Naive thymus-derived CD4-positive, alpha-beta T cell (primary cell): ENCODE measurements at regions of chr1 and their contacts with region 1.

Region 1: GRCh38 chr1:109483672-109484518 is at the start of gene ATXN7L2:
- DNase-seq: peak; percentile 89 to 95 (median 93)
- ATAC-seq: peak; percentile 91
- H3K4me3 ChIP-seq: peak within 1 kb of the TSS; percentile 98
- H3K4me3 Mint-ChIP-seq: peak within 1 kb of the TSS; percentile 93 to 99 (median 96)
- H3K27ac ChIP-seq: peak within 1 kb of the TSS; percentile 88
- H3K27ac Mint-ChIP-seq: peak within 1 kb of the TSS; percentile 83 to 97 (median 92)
- H3K4me1 ChIP-seq: peaks cover 9 to 14% of the 10 kb centered on the region in 2 donors
- H3K4me1 Mint-ChIP-seq: peaks cover 27 to 44% (median 35%) of the 10 kb centered on the region in 7 donors
- H3K27me3 ChIP-seq: no peaks in the 10 kb centered on the region
- H3K27me3 Mint-ChIP-seq: peaks cover 0 to 23% (median under 1%) of the 10 kb centered on the region in 5 donors
- total RNA-seq, gene ATXN7L2: 10.5 to 12.8 (median 11.7) TPM

Region 2: GRCh38 chr1:109090196-109091077 is 393.5 kb before region 1 on chr1 and contains the start of gene TMEM167B:
- CTCF ChIA-PET with region 1: no interaction called
- POLR2A ChIA-PET with region 1: no interaction called
- intact Hi-C with region 1: loop called in 1 of 2 experiments (anchors 5 kb)
- DNase-seq: peak; percentile 71 to 92 (median 87)
- ATAC-seq: peak; percentile 98
- H3K4me3 ChIP-seq: peak within 1 kb of the TSS; percentile 84
- H3K4me3 Mint-ChIP-seq: peak within 1 kb of the TSS; percentile 88 to 98 (median 96)
- H3K27ac ChIP-seq: peak within 1 kb of the TSS; percentile 97
- H3K27ac Mint-ChIP-seq: peak within 1 kb of the TSS; percentile 90 to 99 (median 98)
- H3K4me1 ChIP-seq: peaks cover 14 to 18% of the 10 kb centered on the region in 2 donors
- H3K4me1 Mint-ChIP-seq: peaks cover 15 to 43% (median 36%) of the 10 kb centered on the region in 7 donors
- H3K27me3 ChIP-seq: no peaks in the 10 kb centered on the region
- H3K27me3 Mint-ChIP-seq: no peaks in the 10 kb centered on the region
- total RNA-seq, gene TMEM167B: 33.2 to 65.6 (median 41.2) TPM

Region 3: GRCh38 chr1:109248797-109249642 is 234.9 kb before region 1 on chr1 and contains the start of gene CELSR2:
- CTCF ChIA-PET with region 1: no interaction called
- POLR2A ChIA-PET with region 1: no interaction called
- intact Hi-C with region 1: loop called (anchors 1 kb)
- DNase-seq: peak; percentile 49 to 73 (median 60)
- ATAC-seq: peak; percentile 91
- H3K4me3 ChIP-seq: peak within 1 kb of the TSS; percentile 58
- H3K4me3 Mint-ChIP-seq: peak within 1 kb of the TSS; percentile 65 to 85 (median 72)
- H3K27ac ChIP-seq: no peak within 1 kb of the TSS
- H3K27ac Mint-ChIP-seq: peak within 1 kb of the TSS in 1 of 9 donors; percentile 43
- H3K4me1 ChIP-seq: peaks cover 11 to 15% of the 10 kb centered on the region in 2 donors
- H3K4me1 Mint-ChIP-seq: peaks cover 3 to 19% (median 13%) of the 10 kb centered on the region in 7 donors
- H3K27me3 ChIP-seq: no peaks in the 10 kb centered on the region
- H3K27me3 Mint-ChIP-seq: peaks cover 0 to 24% (median 7%) of the 10 kb centered on the region in 5 donors
- total RNA-seq, gene CELSR2: 3.0 to 6.4 (median 3.2) TPM

Region 4: GRCh38 chr1:109394591-109395281 is 89.2 kb before region 1 on chr1:
- CTCF ChIA-PET with region 1: no interaction called
- POLR2A ChIA-PET with region 1: no interaction called
- intact Hi-C with region 1: no loop called
- DNase-seq: no peak
- ATAC-seq: no peak
- H3K4me3 ChIP-seq: no peak overlapping the region
- H3K4me3 Mint-ChIP-seq: no peak overlapping the region
- H3K27ac ChIP-seq: no peak overlapping the region
- H3K27ac Mint-ChIP-seq: no peak overlapping the region
- H3K4me1 ChIP-seq: peaks cover 0 to 6% of the 10 kb centered on the region in 2 donors
- H3K4me1 Mint-ChIP-seq: peaks cover 0 to 39% (median 16%) of the 10 kb centered on the region in 7 donors
- H3K27me3 ChIP-seq: peaks cover 0 to 18% of the 10 kb centered on the region in 2 donors
- H3K27me3 Mint-ChIP-seq: peaks cover 52 to 74% (median 54%) of the 10 kb centered on the region in 5 donors

Region 5: DNA sequence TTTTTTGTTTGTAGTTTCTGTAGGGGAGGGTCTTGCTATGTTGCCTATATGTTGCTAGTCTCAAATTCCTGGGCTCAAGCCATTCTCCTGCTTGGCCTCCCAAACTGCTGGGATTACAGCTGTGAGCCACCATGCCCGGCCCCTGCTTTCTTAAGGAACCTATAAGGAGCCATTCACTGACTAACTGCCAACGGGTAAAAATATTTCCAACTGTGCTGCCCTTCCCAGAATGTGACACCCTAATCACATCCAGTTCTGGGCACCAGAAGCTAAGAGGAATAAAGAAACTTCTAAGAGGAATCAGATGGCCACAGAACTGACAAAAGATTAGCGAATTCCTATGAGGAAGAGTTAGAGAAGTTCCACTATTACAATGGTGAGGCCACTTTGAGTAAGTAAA is 11.1 kb before region 1 on chr1:
- CTCF ChIA-PET with region 1: no interaction called
- POLR2A ChIA-PET with region 1: no interaction called
- intact Hi-C with region 1: no loop called
- DNase-seq: no peak
- ATAC-seq: no peak
- H3K4me3 ChIP-seq: no peak overlapping the region
- H3K4me3 Mint-ChIP-seq: no peak overlapping the region
- H3K27ac ChIP-seq: no peak overlapping the region
- H3K27ac Mint-ChIP-seq: no peak overlapping the region
- H3K4me1 ChIP-seq: no peaks in the 10 kb centered on the region
- H3K4me1 Mint-ChIP-seq: peaks cover 0 to 3% (median 0%) of the 10 kb centered on the region in 7 donors
- H3K27me3 ChIP-seq: peaks cover 6 to 12% of the 10 kb centered on the region in 2 donors
- H3K27me3 Mint-ChIP-seq: peaks cover 50 to 75% (median 57%) of the 10 kb centered on the region in 5 donors

Region 6: DNA sequence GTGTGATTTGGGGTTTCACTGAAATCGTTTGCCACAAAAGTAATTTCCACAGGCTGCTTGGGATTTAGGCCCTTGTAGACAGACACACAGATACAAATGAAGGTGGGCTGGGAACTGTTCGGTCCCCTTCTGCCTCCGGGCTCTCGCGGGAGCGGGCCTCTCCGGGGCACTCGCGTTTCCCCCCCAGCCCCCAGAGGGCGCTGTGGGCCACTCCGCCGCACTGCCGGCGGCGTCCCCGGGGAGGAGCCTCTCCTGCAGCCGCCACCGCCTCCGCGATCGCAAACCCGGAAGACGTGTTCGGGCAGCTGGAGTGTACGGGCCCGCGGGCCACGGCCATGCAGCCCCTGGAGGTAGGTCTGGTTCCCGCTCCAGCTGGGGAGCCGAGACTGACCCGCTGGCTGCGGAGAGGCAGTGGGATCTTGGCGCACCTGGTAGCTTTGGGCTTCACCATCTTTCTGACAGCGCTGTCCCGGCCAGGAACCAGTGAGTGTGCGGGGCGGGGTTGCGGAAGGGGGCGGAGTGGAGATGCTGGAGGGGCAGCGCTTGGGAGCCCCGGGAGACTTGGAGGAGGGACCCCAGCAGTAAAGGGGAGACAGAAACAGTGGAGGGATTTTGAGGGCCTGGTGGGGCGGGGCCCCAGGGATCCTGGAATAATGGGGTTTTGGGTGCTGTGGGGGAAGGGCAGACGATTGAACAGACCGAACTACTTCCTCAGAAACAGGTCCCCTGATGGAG is 10.1 kb after region 1 on chr1 and contains the start of gene CYB561D1:
- CTCF ChIA-PET with region 1: interaction called, 417 read pairs
- POLR2A ChIA-PET with region 1: interaction called, 478 read pairs
- intact Hi-C with region 1: loop called (anchors 1 kb)
- DNase-seq: peak; percentile 83 to 97 (median 91)
- ATAC-seq: peak; percentile 96
- H3K4me3 ChIP-seq: peak within 1 kb of the TSS; percentile 96
- H3K4me3 Mint-ChIP-seq: peak within 1 kb of the TSS; percentile 90 to 98 (median 94)
- H3K27ac ChIP-seq: peak within 1 kb of the TSS; percentile 72
- H3K27ac Mint-ChIP-seq: peak within 1 kb of the TSS; percentile 84 to 98 (median 92)
- H3K4me1 ChIP-seq: peaks cover 31 to 59% of the 10 kb centered on the region in 2 donors
- H3K4me1 Mint-ChIP-seq: peaks cover 40 to 59% (median 53%) of the 10 kb centered on the region in 7 donors
- H3K27me3 ChIP-seq: no peaks in the 10 kb centered on the region
- H3K27me3 Mint-ChIP-seq: no peaks in the 10 kb centered on the region
- total RNA-seq, gene CYB561D1: 19.6 to 41.5 (median 24.1) TPM

Region 7: GRCh38 chr1:109532365-109533136 is 48.7 kb after region 1 on chr1:
- CTCF ChIA-PET with region 1: interaction called, 1,240 read pairs
- POLR2A ChIA-PET with region 1: interaction called, 18 read pairs
- intact Hi-C with region 1: no loop called
- DNase-seq: peak; percentile 79 to 96 (median 87)
- ATAC-seq: peak; percentile 94
- H3K4me3 ChIP-seq: peak overlapping the region; percentile 57
- H3K4me3 Mint-ChIP-seq: peak overlapping the region; percentile 78 to 91 (median 86)
- H3K27ac ChIP-seq: no peak overlapping the region
- H3K27ac Mint-ChIP-seq: peak overlapping the region; percentile 66 to 95 (median 86)
- H3K4me1 ChIP-seq: peaks cover 11 to 28% of the 10 kb centered on the region in 2 donors
- H3K4me1 Mint-ChIP-seq: peaks cover 22 to 40% (median 30%) of the 10 kb centered on the region in 7 donors
- H3K27me3 ChIP-seq: no peaks in the 10 kb centered on the region
- H3K27me3 Mint-ChIP-seq: no peaks in the 10 kb centered on the region

Region 8: GRCh38 chr1:109984456-109985275 is 500.8 kb after region 1 on chr1 and contains the start of gene AHCYL1:
- CTCF ChIA-PET with region 1: interaction called, 3 read pairs
- POLR2A ChIA-PET with region 1: interaction called, 4 read pairs
- intact Hi-C with region 1: loop called (anchors 1 kb)
- DNase-seq: peak; percentile 97 to 99 (median 99)
- ATAC-seq: peak; percentile 99
- H3K4me3 ChIP-seq: peak within 1 kb of the TSS; percentile 72
- H3K4me3 Mint-ChIP-seq: peak within 1 kb of the TSS; percentile 87 to 100 (median 97)
- H3K27ac ChIP-seq: peak within 1 kb of the TSS; percentile 92
- H3K27ac Mint-ChIP-seq: peak within 1 kb of the TSS; percentile 94 to 99 (median 98)
- H3K4me1 ChIP-seq: peaks cover 22 to 24% of the 10 kb centered on the region in 2 donors
- H3K4me1 Mint-ChIP-seq: peaks cover 22 to 49% (median 42%) of the 10 kb centered on the region in 7 donors
- H3K27me3 ChIP-seq: no peaks in the 10 kb centered on the region
- H3K27me3 Mint-ChIP-seq: peaks cover 0 to 6% (median 0%) of the 10 kb centered on the region in 5 donors
- total RNA-seq, gene AHCYL1: 16.6 to 60.1 (median 37.1) TPM